Activated CD4-positive, alpha-beta T cell treated with anti-CD3 and anti-CD28 coated beads for 36 hours (primary cell): ENCODE measurements at regions of chr3 and their contacts with region 1.

Region 1: GRCh38 chr3:120095226-120095978 is 1.2 kb upstream of the GSK3B start:
- DNase-seq: peak; percentile 94
- ATAC-seq: peak; percentile 35
- H3K4me3 Mint-ChIP-seq: no peak overlapping the region
- H3K27ac Mint-ChIP-seq: no peak overlapping the region
- H3K4me1 Mint-ChIP-seq: peaks cover 17% of the 10 kb centered on the region
- H3K27me3 Mint-ChIP-seq: no peaks in the 10 kb centered on the region

Region 2: GRCh38 chr3:119322835-119323722 is 772.3 kb before region 1 on chr3:
- CTCF ChIA-PET with region 1: no interaction called
- POLR2A ChIA-PET with region 1: no interaction called
- intact Hi-C with region 1: loop called in 1 of 2 experiments (anchors 10 kb)
- DNase-seq: peak; percentile 97
- ATAC-seq: peak; percentile 92
- H3K4me3 Mint-ChIP-seq: peak overlapping the region; percentile 83
- H3K27ac Mint-ChIP-seq: peak overlapping the region; percentile 87
- H3K4me1 Mint-ChIP-seq: peaks cover 46% of the 10 kb centered on the region
- H3K27me3 Mint-ChIP-seq: no peaks in the 10 kb centered on the region

Region 3: GRCh38 chr3:119498186-119498987 is 597.0 kb before region 1 on chr3 and contains the start of gene TIMMDC1:
- CTCF ChIA-PET with region 1: no interaction called
- POLR2A ChIA-PET with region 1: interaction called, 7 read pairs
- intact Hi-C with region 1: loop called (anchors 1 kb)
- DNase-seq: peak; percentile 99
- ATAC-seq: peak; percentile 99
- H3K4me3 Mint-ChIP-seq: peak within 1 kb of the TSS; percentile 96
- H3K27ac Mint-ChIP-seq: peak within 1 kb of the TSS; percentile 99
- H3K4me1 Mint-ChIP-seq: peaks cover 39% of the 10 kb centered on the region
- H3K27me3 Mint-ChIP-seq: no peaks in the 10 kb centered on the region
- total RNA-seq, gene TIMMDC1: 82.3 to 96.0 TPM

Region 4: DNA sequence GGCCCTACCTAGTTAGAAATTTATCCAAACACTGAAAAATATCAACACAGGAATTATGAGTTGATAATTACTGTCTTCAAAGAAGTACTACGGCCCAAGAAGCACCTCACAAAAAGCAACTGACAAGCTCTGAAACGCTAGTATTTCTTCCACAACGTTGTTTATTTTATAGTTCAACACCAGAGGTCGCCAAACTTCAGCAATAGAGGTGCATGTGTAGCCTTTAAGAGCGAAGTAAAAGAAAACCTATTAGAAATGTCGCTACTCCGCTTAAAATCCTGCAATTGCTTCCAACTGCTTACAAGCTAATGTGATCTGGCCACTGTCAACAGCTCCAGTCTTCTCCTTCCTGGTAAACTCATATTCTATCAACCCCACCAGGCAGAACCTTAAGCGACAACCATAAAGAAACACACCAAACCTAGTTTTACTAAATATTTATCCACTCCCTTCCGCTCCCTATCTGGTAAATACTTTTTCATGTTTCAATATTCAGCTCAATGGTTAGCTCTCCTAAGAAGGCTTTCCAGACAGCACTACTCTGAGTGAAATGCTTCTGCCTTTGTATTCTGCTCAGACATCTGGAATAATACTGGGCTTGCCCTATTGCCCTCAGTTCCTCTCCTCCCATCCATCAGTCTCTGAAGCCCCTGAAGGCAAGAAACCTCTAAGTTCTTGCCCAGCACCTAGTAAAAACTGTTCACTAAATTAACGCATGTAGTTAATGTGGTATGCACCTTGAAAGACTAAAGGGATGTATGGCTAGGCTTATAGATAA is 203.3 kb before region 1 on chr3:
- CTCF ChIA-PET with region 1: interaction called, 5 read pairs
- POLR2A ChIA-PET with region 1: no interaction called
- intact Hi-C with region 1: loop called (anchors 1 to 2 kb)
- DNase-seq: peak; percentile 52
- ATAC-seq: peak; percentile 80
- H3K4me3 Mint-ChIP-seq: no peak overlapping the region
- H3K27ac Mint-ChIP-seq: no peak overlapping the region
- H3K4me1 Mint-ChIP-seq: peaks cover 19% of the 10 kb centered on the region
- H3K27me3 Mint-ChIP-seq: no peaks in the 10 kb centered on the region

Region 5: DNA sequence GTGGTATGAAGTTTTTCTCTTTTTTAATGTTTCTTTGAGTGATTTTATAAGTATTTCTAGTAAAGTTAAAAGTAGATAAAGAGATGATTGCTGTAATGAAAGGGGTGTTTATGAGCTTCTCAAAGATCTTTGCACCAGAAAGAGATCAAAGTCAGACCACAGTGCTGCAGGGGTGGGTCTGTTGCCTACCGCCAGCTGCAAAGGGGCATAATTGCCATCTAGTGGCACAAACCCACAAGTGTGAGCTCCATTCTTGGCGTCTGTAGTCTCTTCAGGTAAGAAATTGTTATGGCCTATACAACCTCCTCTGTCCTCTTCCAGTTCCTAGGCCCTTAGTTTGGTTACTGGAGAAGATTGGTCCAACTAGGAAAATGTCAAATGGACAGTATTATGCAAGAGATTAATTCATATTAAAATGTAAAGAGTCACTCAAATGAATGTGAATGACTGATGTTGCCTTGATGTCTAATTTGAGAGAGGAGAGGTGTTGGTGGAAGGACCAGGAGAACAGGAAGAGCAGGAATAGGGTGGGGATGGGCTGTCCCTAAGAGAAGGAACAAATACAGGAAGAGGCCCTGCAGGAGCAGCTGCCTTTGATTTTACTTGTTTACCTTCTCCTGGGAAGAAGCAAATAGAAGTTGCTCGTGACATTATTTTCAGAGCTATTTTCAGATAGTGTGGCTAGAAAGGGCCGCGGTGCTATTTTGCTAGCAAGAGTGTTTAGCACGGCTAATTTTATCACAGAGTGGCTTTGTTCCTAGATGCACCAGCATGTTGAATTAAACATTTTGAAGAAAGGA is 51.9 kb after region 1 on chr3:
- CTCF ChIA-PET with region 1: interaction called, 3 read pairs
- POLR2A ChIA-PET with region 1: interaction called, 5 read pairs
- intact Hi-C with region 1: loop called (anchors 1 to 5 kb)
- DNase-seq: peak; percentile 65
- ATAC-seq: peak; percentile 57
- H3K4me3 Mint-ChIP-seq: no peak overlapping the region
- H3K27ac Mint-ChIP-seq: no peak overlapping the region
- H3K4me1 Mint-ChIP-seq: peaks cover 27% of the 10 kb centered on the region
- H3K27me3 Mint-ChIP-seq: no peaks in the 10 kb centered on the region

Region 6: GRCh38 chr3:120596116-120596852 is 500.9 kb after region 1 on chr3 and contains the start of gene NDUFB4:
- CTCF ChIA-PET with region 1: no interaction called
- POLR2A ChIA-PET with region 1: interaction called, 6 read pairs
- intact Hi-C with region 1: loop called (anchors 1 to 2 kb)
- DNase-seq: peak; percentile 98
- ATAC-seq: peak; percentile 94
- H3K4me3 Mint-ChIP-seq: no peak within 1 kb of the TSS
- H3K27ac Mint-ChIP-seq: peak within 1 kb of the TSS; percentile 94
- H3K4me1 Mint-ChIP-seq: peaks cover 10% of the 10 kb centered on the region
- H3K27me3 Mint-ChIP-seq: no peaks in the 10 kb centered on the region
- total RNA-seq, gene NDUFB4: 157 to 186 TPM

Region 7: GRCh38 chr3:121834696-121835464 is 1739.5 kb after region 1 on chr3 and contains the starts of genes EAF2 and IQCB1:
- CTCF ChIA-PET with region 1: no interaction called
- POLR2A ChIA-PET with region 1: no interaction called
- intact Hi-C with region 1: loop called in 1 of 2 experiments (anchors 10 kb)
- DNase-seq: peak; percentile 98
- ATAC-seq: peak; percentile 98
- H3K4me3 Mint-ChIP-seq: peak within 1 kb of the TSS; percentile 98
- H3K27ac Mint-ChIP-seq: peak within 1 kb of the TSS; percentile 94
- H3K4me1 Mint-ChIP-seq: peaks cover 38% of the 10 kb centered on the region
- H3K27me3 Mint-ChIP-seq: no peaks in the 10 kb centered on the region
- total RNA-seq, gene EAF2: 12.4 to 12.9 TPM
- total RNA-seq, gene IQCB1: 41.3 to 42.8 TPM